ENCODE measurements at regions of chr13 and their contacts with region 1.

Region 1: DNA sequence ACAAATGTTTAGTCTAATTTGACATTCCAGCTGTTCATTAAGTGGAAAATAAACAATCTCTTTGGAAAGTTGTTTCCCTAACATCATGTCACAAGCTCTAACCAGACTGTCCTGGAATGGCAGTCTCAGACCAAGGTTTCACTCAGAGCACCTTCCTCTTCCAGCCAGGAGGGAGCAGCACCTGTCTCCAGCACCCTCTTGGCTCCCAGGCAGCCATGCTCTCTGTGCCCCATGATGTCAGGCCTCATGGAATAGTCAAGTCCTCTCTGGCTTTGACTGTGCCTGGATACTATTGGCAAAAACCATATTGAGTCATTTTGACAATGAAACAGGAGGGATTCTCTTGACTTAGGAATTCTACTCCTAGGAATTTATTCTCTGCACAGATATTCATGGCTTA is 171.4 kb downstream of the OXGR1 start:
- DNase-seq: no peak
- ATAC-seq: no peak
- H3K4me3 ChIP-seq: no peak overlapping the region
- H3K27ac ChIP-seq: no peak overlapping the region
- H3K4me1 ChIP-seq: no peaks in the 10 kb centered on the region
- H3K27me3 ChIP-seq: no peaks in the 10 kb centered on the region
- CTCF ChIP-seq: no peak

Region 2: GRCh38 chr13:96844616-96845015 is 21.7 kb after region 1 on chr13:
- intact Hi-C with region 1: no loop called
- DNase-seq: no peak
- ATAC-seq: no peak
- H3K4me3 ChIP-seq: no peak overlapping the region
- H3K27ac ChIP-seq: no peak overlapping the region
- H3K4me1 ChIP-seq: no peaks in the 10 kb centered on the region
- H3K27me3 ChIP-seq: no peaks in the 10 kb centered on the region
- CTCF ChIP-seq: no peak

Region 3: DNA sequence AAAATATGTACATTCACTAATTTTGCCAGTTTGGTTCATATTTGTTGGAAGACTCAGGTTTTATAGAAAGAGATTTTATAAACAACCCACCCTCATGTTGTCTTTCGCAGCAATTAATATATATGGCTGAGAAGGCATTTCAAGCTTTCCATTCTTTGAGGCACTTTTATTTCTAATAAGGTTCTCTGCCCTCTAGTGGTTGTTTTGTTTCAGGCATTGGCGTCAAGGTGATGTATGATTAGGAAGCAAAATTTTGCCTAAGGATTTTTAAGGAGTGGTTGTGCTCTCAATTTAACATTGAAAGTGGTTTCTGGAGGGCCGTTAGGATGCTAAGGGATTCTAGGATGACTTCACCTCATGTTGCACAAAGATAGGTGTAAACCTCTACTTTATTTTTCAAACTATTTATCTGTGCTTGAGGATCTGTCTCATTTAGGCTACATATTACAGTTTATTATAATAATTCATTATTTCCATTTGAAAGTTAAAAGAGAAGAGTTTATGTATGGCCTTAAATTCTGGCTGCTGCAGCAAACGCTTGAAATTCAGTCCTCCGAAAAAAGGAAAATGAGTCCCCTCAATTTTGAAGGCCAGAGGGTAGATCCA is 135.5 kb after region 1 on chr13:
- intact Hi-C with region 1: loop called in 1 of 2 experiments (anchors 5 kb)
- DNase-seq: no peak
- ATAC-seq: no peak
- H3K4me3 ChIP-seq: no peak overlapping the region
- H3K27ac ChIP-seq: no peak overlapping the region
- H3K4me1 ChIP-seq: no peaks in the 10 kb centered on the region
- H3K27me3 ChIP-seq: no peaks in the 10 kb centered on the region
- CTCF ChIP-seq: peak; percentile 55

Measured in psoas muscle (tissue), 8 donors.